ENCODE measurements at regions of chr3 and their contacts with region 1.

Region 1: DNA sequence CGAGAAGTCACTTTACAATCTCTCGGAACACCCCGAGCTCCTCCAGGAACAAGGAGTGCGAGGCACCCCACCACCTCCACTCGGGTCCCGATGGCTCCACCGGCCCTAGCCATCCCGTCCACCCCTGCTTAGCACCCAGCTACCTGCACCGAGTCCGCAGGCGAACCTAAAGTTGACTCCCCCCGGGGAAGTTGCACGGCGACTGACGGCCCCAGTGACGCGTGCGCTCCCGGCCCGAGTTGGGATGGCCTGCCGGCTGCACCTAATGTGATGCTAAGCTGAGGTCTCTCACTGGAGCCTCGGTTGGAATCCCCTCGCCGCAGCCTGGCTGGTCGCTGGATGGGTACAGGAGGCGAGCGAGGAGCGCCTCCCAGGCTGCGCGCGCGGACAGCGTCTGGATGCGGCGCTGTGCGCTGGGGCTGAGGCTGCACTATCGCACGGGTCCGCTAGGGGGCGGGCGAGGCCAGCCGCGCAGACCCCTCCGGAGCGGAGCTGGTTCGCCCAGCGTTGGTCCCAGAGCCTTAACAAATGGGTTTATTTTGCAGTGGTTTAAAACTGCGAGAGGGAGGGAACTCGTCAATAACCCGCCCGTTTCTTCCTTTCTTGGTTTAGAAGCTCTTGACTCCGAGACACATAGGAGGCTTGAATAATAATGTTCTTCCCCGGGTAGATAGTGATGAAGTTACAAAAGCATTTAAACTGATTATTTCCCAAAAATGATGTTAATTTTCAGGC is at the start of gene OXTR:
- DNase-seq: peak; percentile 68
- H3K4me3 ChIP-seq: peak within 1 kb of the TSS; percentile 73
- H3K27me3 ChIP-seq: no peaks in the 10 kb centered on the region
- CTCF ChIP-seq: peak; percentile 97
- polyA plus RNA-seq, gene OXTR: 168 and 195 TPM in 2 replicates

Region 2: DNA sequence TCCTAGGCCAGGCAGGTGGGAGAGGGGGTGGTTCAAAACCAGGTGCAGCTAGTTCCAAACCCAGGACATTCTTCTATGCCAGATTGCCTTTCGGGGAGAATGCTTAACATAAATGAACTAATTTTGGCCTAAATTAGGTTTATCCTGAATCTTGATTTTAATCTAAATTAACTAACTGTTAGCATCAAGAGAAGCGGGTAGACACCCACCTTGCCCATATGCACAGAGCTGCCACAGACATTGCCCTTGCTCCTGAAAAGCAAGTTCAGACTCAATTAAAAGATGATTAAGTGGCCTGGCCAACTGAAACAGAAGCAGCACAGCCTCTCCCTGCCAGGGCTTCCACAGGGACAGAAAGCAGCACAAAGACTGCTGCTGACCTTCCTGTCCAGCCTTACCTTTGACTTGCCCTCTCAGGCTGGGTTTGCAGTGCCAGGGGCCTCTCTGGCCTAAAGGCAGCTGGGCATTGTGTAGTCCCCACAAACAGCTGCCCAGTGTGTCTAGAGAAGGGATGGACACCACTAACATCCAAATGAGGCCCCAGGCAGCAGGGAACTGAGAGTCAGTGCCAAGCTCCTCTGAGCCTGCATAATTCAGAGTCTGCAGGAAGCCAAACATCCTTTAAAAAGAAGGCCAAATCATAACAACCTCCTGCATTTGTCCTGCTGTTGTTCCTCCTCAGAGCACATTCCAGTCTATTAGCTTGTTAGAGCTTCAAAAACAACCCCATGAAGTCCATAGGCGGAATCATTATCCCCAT is 15.6 kb after region 1 on chr3:
- CTCF ChIA-PET with region 1: interaction called, 15 read pairs
- POLR2A ChIA-PET with region 1: interaction called, 4 read pairs
- DNase-seq: no peak
- H3K4me3 ChIP-seq: no peak overlapping the region
- H3K27me3 ChIP-seq: no peaks in the 10 kb centered on the region
- CTCF ChIP-seq: no peak

Region 3: DNA sequence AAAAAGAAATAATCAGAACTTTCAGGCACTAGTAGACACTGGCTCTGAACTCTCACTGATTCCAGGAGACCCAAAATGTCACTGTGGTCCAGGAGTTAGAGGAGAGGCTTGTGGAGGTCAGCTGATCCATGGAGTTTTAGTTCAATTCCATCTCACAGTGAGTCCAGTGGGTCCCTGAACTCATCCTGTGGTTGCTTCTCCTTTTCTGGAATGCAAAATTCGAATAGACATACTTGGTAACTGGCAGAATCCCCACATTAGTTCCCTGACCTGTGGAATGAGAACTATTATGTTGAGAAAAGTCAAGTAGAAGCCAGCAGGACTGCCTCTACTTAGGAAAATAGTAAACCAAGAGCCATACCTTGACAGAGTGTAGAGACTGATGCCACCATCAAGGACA is 87.5 kb after region 1 on chr3:
- CTCF ChIA-PET with region 1: interaction called, 26 read pairs
- POLR2A ChIA-PET with region 1: no interaction called
- DNase-seq: no peak
- H3K4me3 ChIP-seq: no peak overlapping the region
- H3K27me3 ChIP-seq: no peaks in the 10 kb centered on the region
- CTCF ChIP-seq: no peak

Region 4: DNA sequence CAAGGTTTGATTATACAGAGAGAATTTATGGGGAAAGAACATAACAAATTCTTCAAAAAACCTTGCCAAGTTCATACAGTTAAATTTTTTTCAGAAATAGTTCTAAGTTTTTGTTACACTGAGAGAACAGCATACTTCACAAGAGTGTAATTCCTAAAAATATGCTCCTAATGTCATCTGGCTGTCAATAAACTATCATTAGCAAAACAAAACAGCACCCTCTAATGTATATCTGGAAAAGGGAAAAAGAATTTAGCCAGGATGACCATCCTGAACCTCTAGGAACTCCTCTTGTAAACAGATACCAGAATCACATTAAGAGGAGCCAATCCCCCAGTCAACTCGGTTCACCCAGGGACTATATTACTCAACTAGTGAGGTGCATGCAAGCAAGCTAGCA is 130.7 kb after region 1 on chr3:
- CTCF ChIA-PET with region 1: interaction called, 26 read pairs
- POLR2A ChIA-PET with region 1: no interaction called
- DNase-seq: no peak
- H3K4me3 ChIP-seq: no peak overlapping the region
- H3K27me3 ChIP-seq: no peaks in the 10 kb centered on the region
- CTCF ChIP-seq: peak; percentile 20; the same call in 1 of the 2 replicates

Region 5: GRCh38 chr3:8954938-8955763 is 185.9 kb after region 1 on chr3:
- CTCF ChIA-PET with region 1: interaction called, 26 read pairs
- POLR2A ChIA-PET with region 1: no interaction called
- DNase-seq: peak; percentile 44
- H3K4me3 ChIP-seq: no peak overlapping the region
- H3K27me3 ChIP-seq: no peaks in the 10 kb centered on the region
- CTCF ChIP-seq: peak; percentile 37

Measured in BJ (cell line).